ENCODE measurements at regions of chr3 and their contacts with region 1.

Region 1: DNA sequence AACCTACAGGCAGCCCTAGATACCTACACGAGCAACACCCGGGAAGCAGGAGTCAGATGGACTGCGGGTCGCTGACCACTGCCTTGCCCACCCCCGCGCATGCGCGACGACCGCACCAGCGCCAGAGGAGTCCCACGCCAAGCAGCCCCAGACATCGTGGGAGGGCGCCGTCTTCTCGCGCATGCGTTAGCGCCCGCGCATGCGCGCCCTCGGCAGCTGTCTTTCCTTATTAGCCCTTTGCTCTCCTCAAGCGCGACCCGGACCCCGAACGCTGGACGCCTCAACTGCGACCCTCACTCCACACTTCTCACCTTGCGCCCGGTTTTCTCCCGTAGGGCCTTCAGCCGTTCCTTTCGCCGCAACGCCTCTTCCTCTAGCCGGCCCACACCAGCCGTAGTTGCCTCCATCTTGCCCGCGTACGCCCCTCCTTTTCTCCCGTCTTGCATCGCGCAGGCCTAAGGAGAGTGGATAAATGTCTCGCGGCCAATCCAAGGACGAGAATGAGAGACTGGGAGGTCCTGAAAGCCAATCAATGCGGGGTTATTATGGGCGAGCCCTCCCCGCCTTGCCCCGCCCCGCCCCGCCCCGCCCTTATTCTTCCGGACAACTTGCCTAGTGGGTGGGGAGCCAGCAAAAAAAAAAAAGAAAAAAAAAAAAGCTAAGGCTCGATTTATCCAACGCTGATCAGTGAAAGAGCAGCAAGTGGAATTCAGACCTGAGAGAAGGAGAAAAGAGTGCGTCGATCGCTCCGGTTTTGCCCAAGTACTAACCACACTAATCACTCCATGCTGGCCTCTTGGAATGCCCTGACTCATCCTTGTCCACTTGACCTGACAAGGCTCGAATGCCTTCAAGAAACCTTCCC is at the start of gene CCDC12:
- DNase-seq: peak; percentile 78 to 99 (median 94)
- ATAC-seq: peak; percentile 81 to 83
- H3K4me3 Mint-ChIP-seq: peak within 1 kb of the TSS; percentile 90 to 100 (median 99)
- H3K27ac Mint-ChIP-seq: peak within 1 kb of the TSS; percentile 96 to 100 (median 99)
- H3K4me1 Mint-ChIP-seq: peaks cover 36 to 80% (median 72%) of the 10 kb centered on the region in 4 donors
- H3K27me3 Mint-ChIP-seq: no peaks in the 10 kb centered on the region
- polyA plus RNA-seq, gene CCDC12: 81.9 to 106 (median 106) TPM

Region 2: GRCh38 chr3:46987743-46988401 is 11.3 kb after region 1 on chr3:
- POLR2A ChIA-PET with region 1: interaction called, 23 read pairs
- DNase-seq: peak; percentile 72 to 92 (median 85)
- ATAC-seq: peak; percentile 96 to 99
- H3K4me3 Mint-ChIP-seq: peak overlapping the region; percentile 53 to 81 (median 74)
- H3K27ac Mint-ChIP-seq: peak overlapping the region; percentile 56 to 95 (median 85)
- H3K4me1 Mint-ChIP-seq: peaks cover 39 to 77% (median 66%) of the 10 kb centered on the region in 4 donors
- H3K27me3 Mint-ChIP-seq: no peaks in the 10 kb centered on the region

Region 3: DNA sequence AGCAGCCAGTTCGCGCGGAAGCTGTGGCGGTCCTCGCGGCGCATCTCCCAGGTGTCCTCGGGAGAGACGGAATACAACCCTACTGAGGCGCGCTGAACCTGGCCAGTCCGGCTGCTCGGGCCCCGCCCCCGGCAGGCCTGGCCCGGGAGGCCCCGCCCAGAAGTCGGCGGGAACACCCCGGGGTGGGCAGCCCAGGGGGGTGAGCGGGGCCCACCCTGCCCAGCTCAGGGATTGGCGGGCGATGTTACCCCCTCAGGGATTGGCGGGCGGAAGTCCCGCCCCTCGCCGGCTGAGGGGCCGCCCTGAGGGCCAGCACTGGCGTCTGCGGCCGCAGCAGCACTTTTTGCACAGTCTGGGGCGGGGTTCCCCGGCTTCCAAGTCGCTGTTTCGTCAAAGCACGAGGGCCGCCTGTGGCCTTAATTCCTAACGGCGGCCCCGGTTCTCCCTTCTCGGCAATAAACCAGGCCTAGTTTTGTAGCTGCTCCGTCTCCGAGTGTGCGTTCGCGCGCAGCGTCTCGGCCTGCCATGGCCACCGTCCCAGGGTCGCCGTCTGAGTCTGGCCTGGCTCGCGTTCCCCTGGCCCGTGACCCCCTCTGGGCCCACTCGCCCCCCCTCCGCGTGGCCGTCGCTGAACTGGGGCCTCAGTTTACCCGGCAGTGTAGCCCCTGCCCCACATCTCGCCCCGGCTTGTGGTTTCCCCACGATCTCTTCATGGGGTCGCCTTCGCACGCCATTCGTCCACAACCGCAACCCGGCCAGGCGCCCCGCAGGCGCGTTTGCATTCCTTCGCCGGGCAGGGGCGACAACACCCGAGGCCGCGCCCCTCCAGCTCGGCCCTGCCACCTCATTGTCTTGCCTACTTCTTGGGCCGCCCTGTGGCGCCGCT is 32.9 kb after region 1 on chr3:
- POLR2A ChIA-PET with region 1: interaction called, 25 read pairs
- DNase-seq: peak; percentile 65 to 91 (median 84)
- ATAC-seq: peak; percentile 95
- H3K4me3 Mint-ChIP-seq: peak overlapping the region; percentile 67 to 87 (median 79)
- H3K27ac Mint-ChIP-seq: peak overlapping the region; percentile 19 to 91 (median 88)
- H3K4me1 Mint-ChIP-seq: peaks cover 3 to 15% (median 9%) of the 10 kb centered on the region in 4 donors
- H3K27me3 Mint-ChIP-seq: no peaks in the 10 kb centered on the region

Region 4: GRCh38 chr3:47513125-47513929 is 536.8 kb after region 1 on chr3 and contains the start of gene ELP6:
- POLR2A ChIA-PET with region 1: no interaction called
- DNase-seq: peak; percentile 95 to 100 (median 98)
- ATAC-seq: peak; percentile 93 to 94
- H3K4me3 Mint-ChIP-seq: peak within 1 kb of the TSS; percentile 95 to 99 (median 96)
- H3K27ac Mint-ChIP-seq: peak within 1 kb of the TSS; percentile 93 to 99 (median 98)
- H3K4me1 Mint-ChIP-seq: peaks cover 6 to 30% (median 22%) of the 10 kb centered on the region in 4 donors
- H3K27me3 Mint-ChIP-seq: no peaks in the 10 kb centered on the region
- polyA plus RNA-seq, gene ELP6: 29.9 to 41.9 (median 33.8) TPM

Measured in naive thymus-derived CD8-positive, alpha-beta T cell (primary cell).